ENCODE measurements at regions of chr1 and their contacts with region 1.

Region 1: GRCh38 chr1:22952694-22953391 is 19.8 kb downstream of the LACTBL1 start:
- DNase-seq: peak in 1 of 3 donors; percentile 43
- ATAC-seq: no peak
- H3K4me3 ChIP-seq: no peak overlapping the region
- H3K27ac ChIP-seq: no peak overlapping the region
- H3K4me1 ChIP-seq: no peaks in the 10 kb centered on the region
- H3K27me3 ChIP-seq: no peaks in the 10 kb centered on the region
- CTCF ChIP-seq: no peak
- POLR2A ChIP-seq: no peak

Region 2: GRCh38 chr1:22704440-22705067 is 248.3 kb before region 1 on chr1:
- intact Hi-C with region 1: loop called in 1 of 2 experiments (anchors 10 kb)
- DNase-seq: peak; percentile 77 to 83 (median 81)
- ATAC-seq: peak; percentile 93 to 99 (median 95)
- H3K4me3 ChIP-seq: no peak overlapping the region
- H3K27ac ChIP-seq: no peak overlapping the region
- H3K4me1 ChIP-seq: no peaks in the 10 kb centered on the region
- H3K27me3 ChIP-seq: no peaks in the 10 kb centered on the region
- CTCF ChIP-seq: peak; percentile 86 to 93 (median 92)
- POLR2A ChIP-seq: no peak

Measured in right lobe of liver (tissue), 6 donors.